Activated CD4-positive, alpha-beta T cell treated with anti-CD3 and anti-CD28 coated beads, Interleukin-2, amount 10 ng/mL, durations not matched to agents 24 days and 14 days (primary cell): ENCODE measurements at regions of chr2 and their contacts with region 1.

Region 1: GRCh38 chr2:121699421-121700333 is 37.0 kb downstream of the NIFK start:
- DNase-seq: peak; percentile 94
- H3K4me3 Mint-ChIP-seq: peak overlapping the region; percentile 91
- H3K27ac Mint-ChIP-seq: peak overlapping the region; percentile 98
- H3K4me1 Mint-ChIP-seq: peaks cover 39% of the 10 kb centered on the region
- H3K27me3 Mint-ChIP-seq: no peaks in the 10 kb centered on the region

Region 2: DNA sequence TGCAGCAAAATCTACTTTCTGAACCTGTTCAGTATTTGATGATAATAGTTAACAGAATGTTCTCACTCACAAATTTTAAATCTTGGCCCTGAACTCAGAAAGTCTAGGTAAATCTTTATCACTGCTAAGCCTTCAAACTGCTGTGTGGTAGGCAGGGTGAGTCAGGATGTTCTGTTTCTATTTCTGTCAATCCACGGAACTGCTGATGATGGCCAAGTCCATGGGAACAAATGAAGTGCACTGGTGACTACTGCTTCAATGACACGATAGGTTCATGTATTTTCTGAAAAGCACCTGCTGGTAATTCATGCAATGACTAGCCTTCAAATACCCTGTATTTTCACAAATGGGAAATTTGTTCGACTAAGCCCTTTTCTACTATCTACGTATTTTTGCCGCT is 22.8 kb after region 1 on chr2:
- intact Hi-C with region 1: loop called (anchors 2 kb)
- DNase-seq: no peak
- H3K4me3 Mint-ChIP-seq: peak overlapping the region; percentile 3
- H3K27ac Mint-ChIP-seq: peak overlapping the region; percentile 82
- H3K4me1 Mint-ChIP-seq: peaks cover 15% of the 10 kb centered on the region
- H3K27me3 Mint-ChIP-seq: no peaks in the 10 kb centered on the region

Region 3: DNA sequence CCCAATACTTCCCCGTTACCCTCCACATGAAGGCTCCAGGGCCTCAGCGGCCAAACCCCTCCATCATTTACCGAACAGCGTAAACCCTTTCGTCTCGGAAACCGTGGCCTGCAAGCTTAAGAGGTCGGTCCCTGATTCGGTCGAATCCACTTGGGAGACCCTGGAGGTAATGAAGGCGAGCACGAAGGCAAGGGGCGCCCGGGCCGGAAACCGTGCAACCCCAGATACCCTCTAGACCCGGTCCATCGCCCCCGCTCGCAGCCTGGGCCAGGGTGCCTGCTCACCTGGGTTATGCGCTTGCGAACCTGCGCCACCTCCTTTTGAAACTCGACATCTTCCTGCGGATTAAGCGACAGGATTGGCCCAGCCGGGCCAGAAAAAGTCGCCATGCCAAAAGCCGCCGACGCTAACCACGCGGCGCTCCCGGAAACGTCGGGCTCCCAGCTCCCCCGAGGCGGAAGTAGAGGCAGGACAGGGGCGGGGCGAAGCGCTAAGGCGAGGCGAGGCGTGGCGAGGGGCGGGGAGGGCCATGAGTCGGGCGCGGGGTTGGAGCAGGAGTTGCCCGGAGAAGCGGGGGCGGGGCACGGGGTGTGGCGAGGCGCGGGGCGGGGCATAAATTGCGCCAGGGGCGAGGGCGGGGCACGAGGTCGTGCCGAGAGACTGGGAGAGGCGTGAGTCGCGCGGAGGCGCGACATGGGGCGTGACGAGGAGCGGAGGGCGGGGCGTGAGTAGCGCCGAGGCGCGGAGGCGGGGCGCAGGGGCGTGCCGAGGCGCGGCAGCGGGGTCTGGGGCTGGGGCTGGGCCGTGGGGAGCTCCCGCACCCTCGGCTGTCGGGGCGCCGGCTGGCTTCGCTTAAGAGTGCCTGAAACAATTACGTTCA is 37.0 kb after region 1 on chr2 and contains the start of gene NIFK:
- intact Hi-C with region 1: loop called (anchors 1 kb)
- DNase-seq: peak; percentile 100
- H3K4me3 Mint-ChIP-seq: peak within 1 kb of the TSS; percentile 90
- H3K27ac Mint-ChIP-seq: peak within 1 kb of the TSS; percentile 93
- H3K4me1 Mint-ChIP-seq: peaks cover 23% of the 10 kb centered on the region
- H3K27me3 Mint-ChIP-seq: no peaks in the 10 kb centered on the region
- total RNA-seq, gene NIFK: 164 and 177 TPM in 2 replicates

Region 4: GRCh38 chr2:121755236-121756111 is 55.8 kb after region 1 on chr2 and contains the start of gene TSN:
- intact Hi-C with region 1: loop called (anchors 2 kb)
- DNase-seq: peak; percentile 99
- H3K4me3 Mint-ChIP-seq: peak within 1 kb of the TSS; percentile 96
- H3K27ac Mint-ChIP-seq: peak within 1 kb of the TSS; percentile 93
- H3K4me1 Mint-ChIP-seq: peaks cover 25% of the 10 kb centered on the region
- H3K27me3 Mint-ChIP-seq: no peaks in the 10 kb centered on the region
- total RNA-seq, gene TSN: 72.6 and 76.5 TPM in 2 replicates

Region 5: DNA sequence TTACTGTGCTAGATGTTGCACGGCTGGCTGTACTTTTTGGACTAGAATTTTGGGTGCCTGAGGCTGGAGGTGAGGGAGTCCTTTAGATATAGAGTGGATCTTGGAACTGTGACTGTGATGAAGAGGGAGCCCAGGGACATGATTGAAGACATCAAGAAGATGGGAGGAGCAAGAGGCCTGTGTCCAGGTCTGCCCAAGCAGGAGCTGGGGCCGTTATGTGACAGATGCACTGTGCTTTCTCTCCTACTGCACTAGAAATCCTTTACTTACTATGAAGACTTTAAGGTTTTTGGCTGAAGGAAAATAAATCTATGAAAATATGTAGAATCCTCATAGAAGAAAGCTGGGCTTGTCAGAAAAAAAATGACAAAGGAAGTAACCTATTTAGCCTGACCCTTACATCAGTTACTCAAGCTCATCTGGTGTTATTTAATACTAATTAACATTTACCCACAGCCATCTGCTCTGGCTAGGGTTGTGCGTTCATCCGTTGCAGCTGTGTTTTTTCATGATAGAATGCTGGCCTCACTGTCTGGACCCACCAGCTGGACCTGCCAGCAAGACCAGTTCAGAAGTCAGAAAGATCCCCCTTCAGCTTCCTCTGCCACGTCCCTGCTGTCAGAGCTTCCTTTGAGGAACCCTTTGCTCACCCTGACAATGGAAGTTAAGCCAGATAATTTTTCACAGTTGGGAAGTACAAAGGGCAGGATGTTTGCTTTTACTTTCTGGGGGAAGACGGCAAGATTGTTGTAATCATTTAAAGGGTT is 72.5 kb after region 1 on chr2:
- intact Hi-C with region 1: no loop called
- DNase-seq: no peak
- H3K4me3 Mint-ChIP-seq: no peak overlapping the region
- H3K27ac Mint-ChIP-seq: no peak overlapping the region
- H3K4me1 Mint-ChIP-seq: no peaks in the 10 kb centered on the region
- H3K27me3 Mint-ChIP-seq: no peaks in the 10 kb centered on the region

Region 6: GRCh38 chr2:122096715-122097114 is 397.0 kb after region 1 on chr2:
- intact Hi-C with region 1: no loop called
- DNase-seq: no peak
- H3K4me3 Mint-ChIP-seq: no peak overlapping the region
- H3K27ac Mint-ChIP-seq: no peak overlapping the region
- H3K4me1 Mint-ChIP-seq: no peaks in the 10 kb centered on the region
- H3K27me3 Mint-ChIP-seq: no peaks in the 10 kb centered on the region